A673 (cell line): ENCODE measurements at regions of chr5 and their contacts with region 1.

Region 1: DNA sequence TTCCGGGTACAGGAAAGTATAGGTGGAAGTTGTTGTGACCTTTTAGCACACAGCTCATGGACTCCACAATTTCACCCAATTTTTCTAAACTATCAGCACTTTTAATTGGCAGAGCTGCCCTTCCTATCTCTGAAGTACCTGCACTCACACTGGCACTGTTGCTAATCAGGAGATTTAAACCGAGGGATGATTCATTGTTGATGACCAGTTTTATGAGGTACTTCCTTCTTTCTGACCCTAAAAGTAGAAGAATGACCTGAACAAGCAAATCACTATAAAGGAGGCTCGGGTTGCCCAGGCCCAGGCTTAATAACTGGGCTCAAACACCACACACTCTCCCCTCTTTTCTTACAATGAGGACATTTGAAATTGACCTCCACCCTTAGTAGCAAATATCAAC is 105.9 kb downstream of the KCNN2 start:
- DNase-seq: no peak
- H3K4me3 ChIP-seq: no peak overlapping the region
- H3K27ac ChIP-seq: no peak overlapping the region
- H3K4me1 ChIP-seq: no peaks in the 10 kb centered on the region
- H3K27me3 ChIP-seq: no peaks in the 10 kb centered on the region
- CTCF ChIP-seq: no peak

Region 2: DNA sequence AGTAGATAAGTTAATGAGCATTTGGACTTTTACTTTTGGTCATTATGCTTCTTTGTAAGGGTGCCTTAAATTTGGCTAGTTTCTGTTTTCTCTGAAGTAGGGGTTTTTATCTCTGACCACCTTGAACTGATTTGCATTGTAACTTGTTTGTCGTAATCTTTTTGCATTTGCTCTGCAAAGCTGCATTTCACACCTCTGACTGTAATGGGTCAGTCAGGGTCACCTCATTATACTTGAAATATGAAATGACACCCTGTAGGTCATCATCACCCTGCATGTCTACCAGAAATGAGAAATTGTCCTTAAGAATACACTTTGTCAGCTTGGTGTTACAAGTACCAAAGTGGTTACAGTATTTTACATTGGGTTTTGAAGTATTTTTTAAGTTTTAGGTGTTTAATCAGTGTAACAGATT is 31.8 kb before region 1 on chr5:
- CTCF ChIA-PET with region 1: no interaction called
- POLR2A ChIA-PET with region 1: no interaction called
- intact Hi-C with region 1: loop called (anchors 1 kb)
- DNase-seq: no peak
- H3K4me3 ChIP-seq: no peak overlapping the region
- H3K27ac ChIP-seq: no peak overlapping the region
- H3K4me1 ChIP-seq: no peaks in the 10 kb centered on the region
- H3K27me3 ChIP-seq: no peaks in the 10 kb centered on the region
- CTCF ChIP-seq: no peak

Region 3: GRCh38 chr5:114686356-114686755 is 218.6 kb after region 1 on chr5:
- CTCF ChIA-PET with region 1: no interaction called
- POLR2A ChIA-PET with region 1: no interaction called
- intact Hi-C with region 1: no loop called
- DNase-seq: no peak
- H3K4me3 ChIP-seq: no peak overlapping the region
- H3K27ac ChIP-seq: no peak overlapping the region
- H3K4me1 ChIP-seq: no peaks in the 10 kb centered on the region
- H3K27me3 ChIP-seq: no peaks in the 10 kb centered on the region
- CTCF ChIP-seq: no peak